Naive thymus-derived CD4-positive, alpha-beta T cell (primary cell): ENCODE measurements at regions of chr7 and their contacts with region 1.

Region 1: GRCh38 chr7:154927624-154928143 is 75.2 kb downstream of the PAXIP1 start:
- DNase-seq: peak; percentile 19 to 82 (median 73)
- ATAC-seq: peak; percentile 76
- H3K4me3 ChIP-seq: peak overlapping the region; percentile 81
- H3K4me3 Mint-ChIP-seq: peak overlapping the region; percentile 92 to 100 (median 94)
- H3K27ac ChIP-seq: peak overlapping the region; percentile 90
- H3K27ac Mint-ChIP-seq: peak overlapping the region; percentile 95 to 99 (median 98)
- H3K4me1 ChIP-seq: peaks cover 13 to 17% of the 10 kb centered on the region in 2 donors
- H3K4me1 Mint-ChIP-seq: peaks cover 14 to 40% (median 34%) of the 10 kb centered on the region in 7 donors
- H3K27me3 ChIP-seq: no peaks in the 10 kb centered on the region
- H3K27me3 Mint-ChIP-seq: peaks cover 0 to 16% (median 0%) of the 10 kb centered on the region in 5 donors

Region 2: GRCh38 chr7:154598396-154598795 is 329.3 kb before region 1 on chr7:
- CTCF ChIA-PET with region 1: no interaction called
- POLR2A ChIA-PET with region 1: no interaction called
- intact Hi-C with region 1: no loop called
- DNase-seq: no peak
- ATAC-seq: no peak
- H3K4me3 ChIP-seq: no peak overlapping the region
- H3K4me3 Mint-ChIP-seq: no peak overlapping the region
- H3K27ac ChIP-seq: no peak overlapping the region
- H3K27ac Mint-ChIP-seq: no peak overlapping the region
- H3K4me1 ChIP-seq: no peaks in the 10 kb centered on the region
- H3K4me1 Mint-ChIP-seq: no peaks in the 10 kb centered on the region
- H3K27me3 ChIP-seq: no peaks in the 10 kb centered on the region
- H3K27me3 Mint-ChIP-seq: no peaks in the 10 kb centered on the region

Region 3: DNA sequence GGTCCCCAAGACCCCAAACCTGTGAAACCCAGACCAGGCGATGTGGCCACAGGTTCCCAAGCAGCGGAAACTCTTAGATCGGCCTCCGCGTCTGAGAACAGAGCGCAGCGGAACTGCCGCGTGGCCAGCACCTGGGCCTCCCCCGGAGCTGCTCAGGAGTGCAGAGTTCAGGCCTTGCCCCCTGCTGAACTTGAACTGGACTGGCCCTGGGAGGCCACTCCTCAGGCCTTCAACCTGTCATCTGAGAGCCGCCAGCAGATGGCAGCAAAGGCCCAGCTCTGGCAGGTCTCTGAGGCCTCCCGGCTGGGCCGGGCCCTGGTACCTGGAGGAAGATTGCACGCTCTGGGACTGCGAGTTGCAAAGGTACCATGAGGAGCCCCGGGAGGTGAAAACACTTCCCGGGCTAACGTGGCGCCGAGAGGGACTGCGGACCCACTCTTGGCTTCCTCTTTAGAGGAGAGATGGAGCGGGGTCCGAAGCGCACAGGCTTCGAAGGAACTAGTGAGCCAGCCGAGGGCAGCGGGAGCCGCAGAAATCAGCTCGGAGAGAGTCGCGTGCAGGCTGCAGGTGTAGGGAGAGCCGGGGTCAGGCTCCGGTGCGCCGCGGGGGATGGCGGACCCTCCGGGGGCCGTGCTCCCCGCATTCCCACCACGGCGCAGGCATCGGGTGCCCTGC is 13.9 kb before region 1 on chr7:
- CTCF ChIA-PET with region 1: interaction called, 20 read pairs
- POLR2A ChIA-PET with region 1: interaction called, 14 read pairs
- intact Hi-C with region 1: loop called (anchors 1 kb)
- DNase-seq: peak; percentile 71 to 89 (median 82)
- ATAC-seq: peak; percentile 96
- H3K4me3 ChIP-seq: peak overlapping the region; percentile 56
- H3K4me3 Mint-ChIP-seq: peak overlapping the region; percentile 76 to 95 (median 90)
- H3K27ac ChIP-seq: no peak overlapping the region
- H3K27ac Mint-ChIP-seq: peak overlapping the region in 8 of 9 donors; percentile 17 to 85 (median 66)
- H3K4me1 ChIP-seq: no peaks in the 10 kb centered on the region
- H3K4me1 Mint-ChIP-seq: peaks cover 3 to 7% (median 4%) of the 10 kb centered on the region in 7 donors
- H3K27me3 ChIP-seq: no peaks in the 10 kb centered on the region
- H3K27me3 Mint-ChIP-seq: peaks cover 4 to 25% (median 14%) of the 10 kb centered on the region in 5 donors

Region 4: GRCh38 chr7:154953006-154953684 is 25.5 kb after region 1 on chr7:
- CTCF ChIA-PET with region 1: interaction called, 40 read pairs
- POLR2A ChIA-PET with region 1: interaction called, 3 read pairs
- intact Hi-C with region 1: loop called (anchors 1 kb)
- DNase-seq: peak; percentile 41 to 63 (median 57)
- ATAC-seq: peak; percentile 82
- H3K4me3 ChIP-seq: no peak overlapping the region
- H3K4me3 Mint-ChIP-seq: no peak overlapping the region
- H3K27ac ChIP-seq: no peak overlapping the region
- H3K27ac Mint-ChIP-seq: peak overlapping the region in 3 of 9 donors; percentile 25 to 67 (median 40)
- H3K4me1 ChIP-seq: no peaks in the 10 kb centered on the region
- H3K4me1 Mint-ChIP-seq: peaks cover 0 to 2% (median 0%) of the 10 kb centered on the region in 7 donors
- H3K27me3 ChIP-seq: no peaks in the 10 kb centered on the region
- H3K27me3 Mint-ChIP-seq: no peaks in the 10 kb centered on the region

Region 5: GRCh38 chr7:155058896-155059295 is 131.2 kb after region 1 on chr7:
- CTCF ChIA-PET with region 1: no interaction called
- POLR2A ChIA-PET with region 1: no interaction called
- intact Hi-C with region 1: no loop called
- DNase-seq: no peak
- ATAC-seq: no peak
- H3K4me3 ChIP-seq: no peak overlapping the region
- H3K4me3 Mint-ChIP-seq: no peak overlapping the region
- H3K27ac ChIP-seq: no peak overlapping the region
- H3K27ac Mint-ChIP-seq: no peak overlapping the region
- H3K4me1 ChIP-seq: no peaks in the 10 kb centered on the region
- H3K4me1 Mint-ChIP-seq: peaks cover 0 to 1% (median 0%) of the 10 kb centered on the region in 7 donors
- H3K27me3 ChIP-seq: no peaks in the 10 kb centered on the region
- H3K27me3 Mint-ChIP-seq: peaks cover 8 to 45% (median 26%) of the 10 kb centered on the region in 5 donors

Region 6: DNA sequence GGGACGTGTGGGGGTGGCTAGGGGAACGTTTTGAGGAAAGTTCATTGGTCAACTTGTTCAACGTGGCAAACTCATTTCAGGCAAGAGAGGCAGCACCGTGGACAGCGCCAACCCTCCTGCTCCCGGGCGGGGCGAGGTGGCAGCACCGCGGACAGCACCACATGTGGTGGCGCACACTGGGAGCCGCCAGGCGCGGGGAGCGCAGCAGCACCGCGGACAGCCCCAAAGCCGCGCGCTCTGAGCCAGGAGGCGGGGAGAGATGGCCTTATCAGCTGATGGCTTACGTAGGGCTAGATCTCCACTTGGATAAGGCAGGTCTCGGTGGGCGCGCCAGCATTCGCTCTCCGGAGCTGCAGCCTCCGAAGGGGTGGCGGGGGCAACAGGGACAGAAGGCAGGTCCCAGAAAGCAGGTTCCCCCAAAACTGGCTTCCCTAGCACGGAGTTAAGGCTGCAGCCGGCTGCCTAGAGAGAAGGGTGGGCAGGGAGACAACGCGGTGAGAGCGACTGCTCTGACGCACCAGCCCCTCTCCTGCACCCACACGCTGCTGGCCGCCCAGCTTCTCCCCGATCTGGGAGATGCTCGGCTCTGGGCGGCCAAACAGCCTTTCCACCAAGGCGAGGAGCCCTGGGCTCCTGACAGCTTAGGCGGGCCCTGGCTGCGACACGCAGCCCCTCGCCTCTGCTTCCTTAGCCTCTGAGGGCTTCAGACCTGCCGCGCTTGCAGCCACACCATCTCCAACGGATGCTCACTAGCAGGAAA is 142.5 kb after region 1 on chr7 and contains the start of gene HTR5A:
- CTCF ChIA-PET with region 1: no interaction called
- POLR2A ChIA-PET with region 1: no interaction called
- intact Hi-C with region 1: loop called (anchors 1 to 5 kb)
- DNase-seq: peak; percentile 58 to 87 (median 78)
- ATAC-seq: peak; percentile 99
- H3K4me3 ChIP-seq: no peak within 1 kb of the TSS
- H3K4me3 Mint-ChIP-seq: no peak within 1 kb of the TSS
- H3K27ac ChIP-seq: no peak within 1 kb of the TSS
- H3K27ac Mint-ChIP-seq: peak within 1 kb of the TSS in 1 of 9 donors; percentile 19
- H3K4me1 ChIP-seq: no peaks in the 10 kb centered on the region
- H3K4me1 Mint-ChIP-seq: peaks cover 0 to 5% (median 0%) of the 10 kb centered on the region in 7 donors
- H3K27me3 ChIP-seq: peaks cover 0 to 15% of the 10 kb centered on the region in 2 donors
- H3K27me3 Mint-ChIP-seq: peaks cover 28 to 67% (median 52%) of the 10 kb centered on the region in 5 donors
- total RNA-seq, gene HTR5A: not detected

Region 7: GRCh38 chr7:155205368-155206317 is 278.0 kb after region 1 on chr7:
- CTCF ChIA-PET with region 1: no interaction called
- POLR2A ChIA-PET with region 1: no interaction called
- intact Hi-C with region 1: loop called (anchors 1 kb)
- DNase-seq: peak; percentile 68 to 90 (median 79)
- ATAC-seq: peak; percentile 90
- H3K4me3 ChIP-seq: peak overlapping the region; percentile 52
- H3K4me3 Mint-ChIP-seq: peak overlapping the region; percentile 70 to 94 (median 86)
- H3K27ac ChIP-seq: peak overlapping the region; percentile 8
- H3K27ac Mint-ChIP-seq: peak overlapping the region; percentile 56 to 99 (median 86)
- H3K4me1 ChIP-seq: peaks cover 8 to 11% of the 10 kb centered on the region in 2 donors
- H3K4me1 Mint-ChIP-seq: peaks cover 19 to 30% (median 21%) of the 10 kb centered on the region in 7 donors
- H3K27me3 ChIP-seq: no peaks in the 10 kb centered on the region
- H3K27me3 Mint-ChIP-seq: no peaks in the 10 kb centered on the region

Region 8: GRCh38 chr7:155524018-155524616 is 596.4 kb after region 1 on chr7:
- CTCF ChIA-PET with region 1: no interaction called
- POLR2A ChIA-PET with region 1: no interaction called
- intact Hi-C with region 1: loop called in 1 of 2 experiments (anchors 1 kb)
- DNase-seq: no peak
- ATAC-seq: no peak
- H3K4me3 ChIP-seq: no peak overlapping the region
- H3K4me3 Mint-ChIP-seq: no peak overlapping the region
- H3K27ac ChIP-seq: no peak overlapping the region
- H3K27ac Mint-ChIP-seq: no peak overlapping the region
- H3K4me1 ChIP-seq: no peaks in the 10 kb centered on the region
- H3K4me1 Mint-ChIP-seq: no peaks in the 10 kb centered on the region
- H3K27me3 ChIP-seq: no peaks in the 10 kb centered on the region
- H3K27me3 Mint-ChIP-seq: peaks cover 26 to 44% (median 39%) of the 10 kb centered on the region in 5 donors

Region 9: GRCh38 chr7:155738652-155739537 is 811.2 kb after region 1 on chr7:
- CTCF ChIA-PET with region 1: no interaction called
- POLR2A ChIA-PET with region 1: no interaction called
- intact Hi-C with region 1: loop called in 1 of 2 experiments (anchors 1 kb)
- DNase-seq: peak; percentile 27 to 85 (median 77)
- ATAC-seq: peak; percentile 93
- H3K4me3 ChIP-seq: no peak overlapping the region
- H3K4me3 Mint-ChIP-seq: peak overlapping the region in 9 of 10 donors; percentile 15 to 71 (median 62)
- H3K27ac ChIP-seq: peak overlapping the region; percentile 30
- H3K27ac Mint-ChIP-seq: peak overlapping the region; percentile 24 to 97 (median 87)
- H3K4me1 ChIP-seq: peaks cover 0 to 12% of the 10 kb centered on the region in 2 donors
- H3K4me1 Mint-ChIP-seq: peaks cover 17 to 71% (median 49%) of the 10 kb centered on the region in 7 donors
- H3K27me3 ChIP-seq: no peaks in the 10 kb centered on the region
- H3K27me3 Mint-ChIP-seq: no peaks in the 10 kb centered on the region